IMR-90 (cell line): ENCODE measurements at regions of chr9 and their contacts with region 1.

Region 1: DNA sequence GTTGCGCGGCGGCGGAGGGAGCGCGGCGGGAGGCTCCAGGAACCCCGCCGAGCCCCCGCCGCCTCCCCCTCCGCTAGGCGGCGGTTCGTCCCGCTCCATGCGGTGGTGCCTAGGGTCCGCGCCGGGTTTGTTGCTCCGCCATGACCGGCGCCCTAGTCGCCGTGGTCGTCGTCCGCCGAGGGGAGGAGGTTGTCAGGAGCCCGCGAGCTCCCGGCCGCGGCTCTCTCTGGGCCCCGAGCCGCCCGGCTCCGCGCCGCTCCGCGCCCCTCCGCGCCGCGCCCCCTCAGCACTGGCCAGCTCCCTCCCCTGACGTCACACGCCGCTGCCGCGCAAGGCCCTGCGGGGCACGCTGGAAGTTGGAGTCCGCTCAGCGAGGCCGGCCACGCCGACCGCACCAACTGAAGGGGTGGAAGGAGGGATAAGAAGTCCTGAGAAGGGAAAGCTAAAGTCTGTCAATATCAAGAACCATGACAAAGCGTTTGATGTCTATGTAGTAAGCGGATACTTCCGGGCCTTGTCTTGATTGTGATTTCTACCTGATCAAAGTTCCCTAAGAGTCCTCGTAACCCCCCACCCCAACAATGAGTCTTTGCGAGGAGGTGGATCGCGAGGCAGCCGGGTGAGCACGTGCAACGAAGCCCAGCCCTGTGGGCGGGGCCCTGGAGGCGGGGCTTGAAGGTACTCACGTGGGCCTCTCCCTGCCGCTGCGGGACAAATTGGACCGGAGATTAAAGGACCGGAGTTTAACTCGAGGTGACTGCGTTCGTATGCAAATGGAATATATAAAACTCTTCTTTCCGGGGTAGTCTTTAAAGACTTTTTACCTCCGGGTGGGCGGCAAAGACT is at the start of gene NR6A1:
- DNase-seq: peak; percentile 95
- ATAC-seq: peak; percentile 93
- H3K4me3 ChIP-seq: peak within 1 kb of the TSS; percentile 58
- H3K27ac ChIP-seq: peak within 1 kb of the TSS; percentile 16
- H3K4me1 ChIP-seq: peaks cover 2% of the 10 kb centered on the region; the same call in 1 of the 2 replicates
- H3K27me3 ChIP-seq: peaks cover 40% of the 10 kb centered on the region
- CTCF ChIP-seq: no peak; the same call in 1 of the 2 replicates
- POLR2A ChIP-seq: no peak
- RAD21 ChIP-seq: no peak
- total RNA-seq, gene NR6A1: 0.28 and 0.36 TPM in 2 replicates

Region 2: DNA sequence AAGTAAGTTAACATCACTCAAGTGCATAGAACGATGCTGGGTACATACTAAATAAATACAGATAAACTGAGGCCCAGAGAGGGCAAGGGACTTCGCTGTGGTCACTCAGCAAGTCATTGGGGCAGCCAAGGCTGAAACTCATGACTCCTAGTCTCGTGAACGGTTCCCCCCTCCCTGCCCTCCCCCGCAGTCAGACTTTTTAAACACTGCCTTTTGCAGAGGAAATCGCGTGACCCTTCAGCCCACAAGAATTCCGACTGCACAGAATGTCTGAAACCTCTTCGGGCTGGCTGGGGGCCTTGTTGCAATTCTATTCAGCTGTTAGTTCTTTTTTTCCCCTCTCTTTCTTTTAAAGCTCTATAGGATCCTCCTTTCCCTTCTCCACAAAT is 485.3 kb before region 1 on chr9:
- CTCF ChIA-PET with region 1: no interaction called
- POLR2A ChIA-PET with region 1: no interaction called
- dilution Hi-C with region 1: no loop called
- in situ Hi-C with region 1: no loop called
- intact Hi-C with region 1: no loop called
- DNase-seq: peak; percentile 99
- ATAC-seq: peak; percentile 69
- H3K4me3 ChIP-seq: no peak overlapping the region
- H3K27ac ChIP-seq: peak overlapping the region; percentile 90
- H3K4me1 ChIP-seq: peaks cover 63% of the 10 kb centered on the region
- H3K27me3 ChIP-seq: no peaks in the 10 kb centered on the region
- CTCF ChIP-seq: no peak
- POLR2A ChIP-seq: no peak
- RAD21 ChIP-seq: no peak; the same call in 1 of the 2 replicates

Region 3: GRCh38 chr9:124513376-124513994 is 257.8 kb before region 1 on chr9:
- CTCF ChIA-PET with region 1: no interaction called
- POLR2A ChIA-PET with region 1: no interaction called
- dilution Hi-C with region 1: no loop called
- in situ Hi-C with region 1: no loop called
- intact Hi-C with region 1: no loop called
- DNase-seq: no peak
- ATAC-seq: no peak; the same call in 1 of the 2 replicates
- H3K4me3 ChIP-seq: no peak overlapping the region
- H3K27ac ChIP-seq: no peak overlapping the region
- H3K4me1 ChIP-seq: no peaks in the 10 kb centered on the region; the same call in 1 of the 2 replicates
- H3K27me3 ChIP-seq: peaks cover 50% of the 10 kb centered on the region
- CTCF ChIP-seq: no peak
- POLR2A ChIP-seq: no peak
- RAD21 ChIP-seq: no peak

Region 4: DNA sequence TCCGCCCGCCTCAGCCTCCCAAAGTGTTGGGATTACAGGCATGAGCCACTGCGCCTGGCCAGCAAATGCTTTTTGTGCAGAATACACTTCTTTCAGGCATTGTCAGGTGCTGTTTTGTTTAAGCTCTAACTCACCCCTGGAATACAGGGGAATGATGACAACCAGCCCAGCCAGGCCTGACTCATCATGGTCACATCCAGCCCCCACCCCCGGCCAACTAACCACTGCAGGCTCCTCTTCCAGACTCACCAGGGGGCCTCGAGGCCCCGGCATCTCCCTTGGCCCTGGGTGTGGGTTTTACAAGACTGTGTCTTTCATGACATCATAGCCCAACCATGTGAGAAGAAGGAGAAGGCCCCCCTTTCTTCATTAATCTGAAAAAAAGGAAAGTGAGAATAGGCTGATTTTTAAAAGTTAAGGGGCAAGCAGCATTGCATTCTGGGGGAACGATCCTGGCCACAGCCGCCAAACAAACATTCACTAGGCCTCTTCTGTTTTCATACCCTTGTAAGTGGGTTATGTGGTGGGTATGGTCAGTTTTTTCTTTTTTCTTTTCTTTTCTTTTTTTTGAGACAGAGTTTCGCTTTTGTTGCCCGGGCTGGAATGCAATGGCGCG is 41.3 kb after region 1 on chr9:
- CTCF ChIA-PET with region 1: interaction called, 10 read pairs
- POLR2A ChIA-PET with region 1: no interaction called
- dilution Hi-C with region 1: no loop called
- in situ Hi-C with region 1: no loop called
- intact Hi-C with region 1: loop called (anchors 1 kb)
- DNase-seq: peak; percentile 99
- ATAC-seq: peak; percentile 91
- H3K4me3 ChIP-seq: no peak overlapping the region
- H3K27ac ChIP-seq: peak overlapping the region; percentile 47
- H3K4me1 ChIP-seq: peaks cover 23% of the 10 kb centered on the region
- H3K27me3 ChIP-seq: no peaks in the 10 kb centered on the region
- CTCF ChIP-seq: peak; percentile 31
- POLR2A ChIP-seq: no peak
- RAD21 ChIP-seq: peak; percentile 41; the same call in 1 of the 2 replicates

Region 5: GRCh38 chr9:124839612-124840299 is 68.5 kb after region 1 on chr9:
- CTCF ChIA-PET with region 1: interaction called, 6 read pairs
- POLR2A ChIA-PET with region 1: no interaction called
- dilution Hi-C with region 1: no loop called
- in situ Hi-C with region 1: no loop called
- intact Hi-C with region 1: loop called (anchors 1 kb)
- DNase-seq: peak; percentile 30
- ATAC-seq: peak; percentile 73
- H3K4me3 ChIP-seq: no peak overlapping the region
- H3K27ac ChIP-seq: no peak overlapping the region
- H3K4me1 ChIP-seq: peaks cover 8% of the 10 kb centered on the region
- H3K27me3 ChIP-seq: no peaks in the 10 kb centered on the region
- CTCF ChIP-seq: peak; percentile 51
- POLR2A ChIP-seq: no peak
- RAD21 ChIP-seq: peak; percentile 42

Region 6: GRCh38 chr9:124894741-124895170 is 123.5 kb after region 1 on chr9:
- CTCF ChIA-PET with region 1: interaction called, 7 read pairs
- POLR2A ChIA-PET with region 1: no interaction called
- dilution Hi-C with region 1: no loop called
- in situ Hi-C with region 1: no loop called
- intact Hi-C with region 1: loop called (anchors 1 kb)
- DNase-seq: peak; percentile 55
- ATAC-seq: peak; percentile 90
- H3K4me3 ChIP-seq: no peak overlapping the region
- H3K27ac ChIP-seq: no peak overlapping the region
- H3K4me1 ChIP-seq: 0 out of 2 replicates have a peak, but pooled peaks cover 2% of the 10 kb centered on the region
- H3K27me3 ChIP-seq: no peaks in the 10 kb centered on the region
- CTCF ChIP-seq: peak; percentile 62
- POLR2A ChIP-seq: no peak
- RAD21 ChIP-seq: peak; percentile 61

Region 7: DNA sequence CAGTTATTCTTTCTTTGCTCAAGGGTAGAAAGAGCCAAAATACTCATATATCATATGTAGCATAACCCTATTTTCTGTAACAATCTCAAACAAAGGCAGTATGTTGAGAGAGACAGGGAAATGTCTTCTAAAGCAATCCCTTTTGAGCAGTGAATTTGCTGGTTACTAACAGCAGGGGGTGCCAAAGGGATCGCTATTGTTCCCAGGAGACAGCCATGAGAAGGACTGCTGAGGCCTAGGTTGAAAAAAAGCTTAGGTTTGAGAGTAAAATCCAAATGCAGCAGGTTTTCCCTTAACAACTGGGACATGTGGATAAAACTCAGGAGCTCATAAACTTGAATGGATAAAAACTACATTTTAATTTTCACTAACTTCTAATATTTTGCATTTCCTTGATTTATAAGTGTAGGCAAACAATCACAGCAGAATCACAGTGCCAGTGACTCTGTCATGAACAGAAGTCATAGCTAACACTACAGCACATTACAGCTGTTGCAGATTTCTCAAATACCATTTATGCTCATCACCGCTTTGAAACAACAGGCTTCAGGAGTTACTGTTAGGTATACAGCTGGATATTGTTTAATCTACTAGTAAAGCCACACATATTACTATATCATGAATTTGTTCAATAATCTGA is 787.3 kb after region 1 on chr9:
- CTCF ChIA-PET with region 1: no interaction called
- POLR2A ChIA-PET with region 1: no interaction called
- dilution Hi-C with region 1: no loop called
- in situ Hi-C with region 1: no loop called
- intact Hi-C with region 1: no loop called
- DNase-seq: peak; percentile 83
- ATAC-seq: peak; percentile 88
- H3K4me3 ChIP-seq: no peak overlapping the region
- H3K27ac ChIP-seq: no peak overlapping the region; the same call in 1 of the 2 replicates
- H3K4me1 ChIP-seq: peaks cover 3% of the 10 kb centered on the region
- H3K27me3 ChIP-seq: no peaks in the 10 kb centered on the region
- CTCF ChIP-seq: peak; percentile 77
- POLR2A ChIP-seq: no peak
- RAD21 ChIP-seq: peak; percentile 85